ENCODE measurements at regions of chr11 and their contacts with region 1.

Region 1: DNA sequence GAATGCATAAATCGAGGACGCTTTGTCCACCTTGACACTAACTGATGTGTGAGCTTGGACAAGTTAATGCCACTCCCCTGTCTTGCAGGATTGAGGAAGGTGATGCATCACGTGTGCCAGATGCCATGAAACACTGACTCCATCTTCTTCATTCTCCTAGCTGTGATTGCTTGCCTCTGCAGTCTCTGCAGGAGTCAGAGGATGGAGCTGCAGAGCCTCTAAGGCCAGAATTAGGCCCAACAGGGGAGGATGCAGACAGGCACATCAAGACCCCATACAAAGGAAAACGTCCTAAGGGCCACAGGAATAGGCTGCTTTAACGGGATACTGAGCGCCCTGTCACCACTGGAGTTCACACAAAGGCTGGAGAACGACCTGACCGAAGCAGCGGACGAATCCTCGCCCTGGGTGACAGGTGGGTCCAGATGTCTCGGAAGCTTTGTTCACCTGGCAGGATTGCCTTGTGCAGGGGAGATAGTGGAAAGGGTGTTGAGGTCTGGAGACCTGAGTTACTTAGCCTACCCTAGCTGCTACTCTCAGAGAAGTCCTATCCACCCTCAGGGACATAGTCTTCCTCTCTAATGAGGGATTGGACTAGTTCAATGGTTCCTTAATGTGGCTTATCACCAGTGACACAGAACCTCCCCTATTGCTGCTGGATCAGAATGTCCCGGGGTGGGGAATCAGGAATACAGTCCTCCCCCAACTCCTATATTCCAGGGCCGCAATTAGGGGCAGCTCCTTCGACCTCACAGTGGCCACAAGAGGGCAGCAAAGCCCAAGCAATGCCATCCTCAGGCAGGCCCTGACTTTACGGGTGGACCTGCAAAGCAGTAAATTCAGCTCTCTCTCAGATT is 32.4 kb downstream of the DBX1 start:
- DNase-seq: peak; percentile 70 to 81 (median 74)
- ATAC-seq: peak; percentile 97
- H3K4me3 ChIP-seq: no peak overlapping the region
- H3K27ac ChIP-seq: no peak overlapping the region
- H3K4me1 ChIP-seq: peaks cover 0 to 6% of the 10 kb centered on the region in 2 experiments; a peak in 2 of 5 replicates
- H3K27me3 ChIP-seq: peaks cover 2 to 25% of the 10 kb centered on the region in 2 experiments; a peak in 3 of 5 replicates
- CTCF ChIP-seq: peak; percentile 87 to 90 (median 88)
- EP300 ChIP-seq: no peak
- POLR2A ChIP-seq: no peak
- RAD21 ChIP-seq: peak; percentile 81 to 93

Region 2: DNA sequence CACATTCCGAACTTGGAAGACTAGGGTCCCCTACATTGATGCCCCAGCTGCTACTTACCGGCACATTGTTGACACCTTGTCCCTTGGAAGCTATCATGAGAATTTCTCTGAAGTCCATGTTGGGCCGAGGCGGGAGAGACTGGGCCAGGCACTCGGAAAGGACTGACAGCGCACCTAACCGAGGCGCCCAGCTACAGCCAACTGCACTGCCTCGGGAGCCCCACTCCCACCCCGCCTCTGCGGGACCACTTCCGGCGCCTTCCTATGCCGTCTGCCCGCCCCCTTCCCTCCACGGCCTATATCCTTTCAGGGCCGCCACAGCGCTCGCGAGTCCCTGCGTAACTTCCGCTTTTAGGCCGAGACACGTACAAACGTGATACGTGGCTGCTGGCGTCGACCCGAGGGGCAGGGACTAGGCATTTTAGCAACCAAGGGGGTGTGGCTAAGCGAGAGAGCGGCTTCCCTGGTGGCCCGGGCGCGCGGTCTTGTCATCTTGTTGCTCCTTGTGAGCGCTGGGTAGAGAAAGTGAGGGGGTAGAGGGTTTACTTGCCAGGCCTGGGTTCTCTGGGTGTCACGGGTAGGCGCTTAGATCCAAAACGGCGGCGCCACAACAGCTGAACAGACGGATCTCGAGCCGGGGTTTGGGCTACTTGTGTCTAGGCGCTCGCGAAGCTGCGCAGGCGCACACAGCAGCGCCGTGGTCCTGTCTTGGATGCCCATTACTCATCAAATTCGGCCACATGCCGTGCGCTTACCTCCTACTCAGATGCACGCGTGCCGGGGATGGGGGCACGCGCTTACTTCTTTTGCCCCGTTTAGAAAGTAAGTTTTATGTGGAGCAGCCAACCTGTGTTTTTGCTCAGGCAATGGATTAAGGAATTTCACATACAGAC is 1493.5 kb before region 1 on chr11 and contains the start of gene SPTY2D1:
- CTCF ChIA-PET with region 1: no interaction called
- POLR2A ChIA-PET with region 1: no interaction called
- in situ Hi-C with region 1: no loop called
- intact Hi-C with region 1: no loop called
- DNase-seq: peak; percentile 91 to 100 (median 92)
- ATAC-seq: peak; percentile 98
- H3K4me3 ChIP-seq: peak within 1 kb of the TSS; percentile 95
- H3K27ac ChIP-seq: peak within 1 kb of the TSS; percentile 94
- H3K4me1 ChIP-seq: peaks cover 4 to 5% of the 10 kb centered on the region in 2 experiments; a peak in 3 of 5 replicates
- H3K27me3 ChIP-seq: no peaks in the 10 kb centered on the region
- CTCF ChIP-seq: peak in 1 of 3 experiments; percentile 22; a peak in 1 of 6 replicates
- EP300 ChIP-seq: peak; percentile 32
- POLR2A ChIP-seq: peak; percentile 97
- RAD21 ChIP-seq: 0 out of 4 replicates have a peak, but pooled peaks of 1 of the 2 experiments have one; percentile 8
- polyA plus RNA-seq, gene SPTY2D1: 3.2 to 6.1 TPM

Region 3: GRCh38 chr11:19561011-19561410 is 566.9 kb before region 1 on chr11:
- CTCF ChIA-PET with region 1: no interaction called
- POLR2A ChIA-PET with region 1: no interaction called
- in situ Hi-C with region 1: loop called (anchors 5 kb)
- intact Hi-C with region 1: loop called (anchors 5 kb)
- DNase-seq: no peak
- ATAC-seq: no peak
- H3K4me3 ChIP-seq: no peak overlapping the region
- H3K27ac ChIP-seq: no peak overlapping the region
- H3K4me1 ChIP-seq: peaks cover 0 to 5% of the 10 kb centered on the region in 2 experiments; a peak in 1 of 5 replicates
- H3K27me3 ChIP-seq: peaks cover 0 to 17% of the 10 kb centered on the region in 2 experiments; a peak in 2 of 5 replicates
- CTCF ChIP-seq: no peak
- EP300 ChIP-seq: no peak
- POLR2A ChIP-seq: no peak
- RAD21 ChIP-seq: no peak

Region 4: GRCh38 chr11:19938169-19938856 is 189.6 kb before region 1 on chr11:
- CTCF ChIA-PET with region 1: interaction called, 25 read pairs
- POLR2A ChIA-PET with region 1: interaction called, 3 read pairs
- in situ Hi-C with region 1: no loop called
- intact Hi-C with region 1: loop called (anchors 1 kb)
- DNase-seq: peak; percentile 70 to 84 (median 79)
- ATAC-seq: peak; percentile 92
- H3K4me3 ChIP-seq: no peak overlapping the region
- H3K27ac ChIP-seq: no peak overlapping the region
- H3K4me1 ChIP-seq: no peaks in the 10 kb centered on the region; a peak in 1 of 5 replicates
- H3K27me3 ChIP-seq: peaks cover 8 to 42% of the 10 kb centered on the region in 2 experiments
- CTCF ChIP-seq: peak; percentile 86 to 89 (median 88)
- EP300 ChIP-seq: no peak
- POLR2A ChIP-seq: no peak
- RAD21 ChIP-seq: peak; percentile 75 to 84

Region 5: GRCh38 chr11:20337526-20338154 is 209.7 kb after region 1 on chr11:
- CTCF ChIA-PET with region 1: no interaction called
- POLR2A ChIA-PET with region 1: no interaction called
- in situ Hi-C with region 1: loop called (anchors 10 kb)
- intact Hi-C with region 1: loop called (anchors 2 kb)
- DNase-seq: peak in 2 of 4 experiments; percentile 30 to 46
- ATAC-seq: peak; percentile 90
- H3K4me3 ChIP-seq: no peak overlapping the region
- H3K27ac ChIP-seq: no peak overlapping the region
- H3K4me1 ChIP-seq: peaks cover 0 to 4% of the 10 kb centered on the region in 2 experiments; a peak in 2 of 5 replicates
- H3K27me3 ChIP-seq: peaks cover 3 to 16% of the 10 kb centered on the region in 2 experiments; a peak in 4 of 5 replicates
- CTCF ChIP-seq: peak; percentile 40 to 55 (median 53)
- EP300 ChIP-seq: no peak
- POLR2A ChIP-seq: no peak
- RAD21 ChIP-seq: peak in 1 of 2 experiments; percentile 62; a peak in 2 of 4 replicates

Region 6: GRCh38 chr11:20443596-20443995 is 315.7 kb after region 1 on chr11:
- CTCF ChIA-PET with region 1: interaction called, 3 read pairs
- POLR2A ChIA-PET with region 1: no interaction called
- in situ Hi-C with region 1: no loop called
- intact Hi-C with region 1: loop called (anchors 5 kb)
- DNase-seq: peak in 2 of 4 experiments; percentile 24 to 43
- ATAC-seq: peak; percentile 86
- H3K4me3 ChIP-seq: no peak overlapping the region
- H3K27ac ChIP-seq: no peak overlapping the region
- H3K4me1 ChIP-seq: no peaks in the 10 kb centered on the region
- H3K27me3 ChIP-seq: no peaks in the 10 kb centered on the region
- CTCF ChIP-seq: peak; percentile 23 to 57 (median 42); a peak in 5 of 6 replicates
- EP300 ChIP-seq: no peak
- POLR2A ChIP-seq: no peak
- RAD21 ChIP-seq: peak; percentile 31 to 48

Region 7: DNA sequence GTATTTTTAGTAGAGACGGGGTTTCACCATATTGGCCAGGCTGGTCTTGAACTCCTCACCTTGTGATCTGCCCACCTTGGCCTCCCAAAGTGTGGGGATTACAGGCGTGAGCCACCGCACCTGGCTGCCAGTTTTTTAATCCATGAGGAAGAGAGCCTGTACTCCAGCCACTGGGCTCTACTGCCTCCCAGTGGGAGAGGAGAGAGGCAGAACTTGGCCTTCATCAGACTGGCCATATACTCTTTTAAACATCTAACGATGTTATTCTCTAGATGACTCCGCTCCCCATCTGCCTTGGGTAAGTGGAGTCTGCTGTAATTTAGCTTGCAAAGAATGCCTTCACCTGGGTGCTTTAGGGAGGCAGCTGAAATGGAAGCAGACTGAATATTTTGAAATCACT is 506.1 kb after region 1 on chr11:
- CTCF ChIA-PET with region 1: interaction called, 3 read pairs
- POLR2A ChIA-PET with region 1: no interaction called
- in situ Hi-C with region 1: no loop called
- intact Hi-C with region 1: loop called (anchors 2 kb)
- DNase-seq: peak in 2 of 4 experiments; percentile 20 to 35
- ATAC-seq: peak; percentile 87
- H3K4me3 ChIP-seq: no peak overlapping the region
- H3K27ac ChIP-seq: no peak overlapping the region
- H3K4me1 ChIP-seq: no peaks in the 10 kb centered on the region
- H3K27me3 ChIP-seq: no peaks in the 10 kb centered on the region
- CTCF ChIP-seq: peak; percentile 37 to 61 (median 47); a peak in 4 of 6 replicates
- EP300 ChIP-seq: no peak
- POLR2A ChIP-seq: no peak
- RAD21 ChIP-seq: peak; percentile 48 to 58

Measured in K562 (cell line).